Aorta (tissue), 5 donors: ENCODE measurements at regions of chr18 and their contacts with region 1.

Region 1: DNA sequence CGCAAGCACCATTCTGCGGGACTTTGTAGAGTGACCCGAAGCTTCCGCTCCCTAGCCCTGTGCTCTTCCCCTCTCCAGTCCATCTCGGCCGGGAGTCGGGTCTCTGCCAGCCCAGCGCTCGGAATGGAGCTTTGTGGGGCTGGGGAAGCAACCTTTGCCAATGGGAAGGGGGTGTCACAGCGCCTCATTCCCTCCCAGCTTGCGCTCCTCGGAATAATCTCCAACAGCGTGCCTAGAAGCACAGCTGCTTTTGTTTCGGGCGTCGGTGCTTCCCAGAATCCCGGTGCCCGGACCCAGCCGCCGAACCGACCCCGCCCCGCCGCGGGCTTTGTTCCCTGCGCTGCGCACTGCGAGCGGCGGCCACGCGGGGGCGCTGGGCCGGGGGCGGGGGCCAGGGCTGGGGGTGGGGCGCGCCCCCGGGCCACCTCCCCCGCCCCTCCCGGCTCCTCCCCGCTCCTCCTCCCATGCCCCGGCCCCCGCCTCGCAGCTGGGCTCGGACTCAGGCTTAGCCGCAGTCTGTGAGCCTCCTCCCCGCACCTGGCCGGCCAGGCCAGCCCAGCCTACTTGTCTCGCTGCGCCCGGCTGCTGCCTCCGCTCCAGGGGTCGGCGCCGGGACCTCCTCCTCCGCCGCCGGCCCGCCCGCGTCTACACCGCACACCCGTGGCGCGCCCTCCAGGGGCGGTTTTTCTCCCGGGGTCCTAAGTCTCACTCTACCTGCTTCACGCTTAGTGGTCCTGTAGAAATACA is 77.7 kb upstream of the SMAD2 start:
- DNase-seq: peak; percentile 74 to 90
- ATAC-seq: peak; percentile 90
- H3K4me3 ChIP-seq: peak overlapping the region; percentile 47 to 70
- H3K27ac ChIP-seq: no peak overlapping the region
- H3K4me1 ChIP-seq: no peaks in the 10 kb centered on the region
- H3K27me3 ChIP-seq: no peaks in the 10 kb centered on the region

Region 2: GRCh38 chr18:47883771-47884413 is 124.2 kb before region 1 on chr18:
- intact Hi-C with region 1: loop called in 1 of 2 experiments (anchors 10 kb)
- DNase-seq: no peak
- ATAC-seq: no peak
- H3K4me3 ChIP-seq: no peak overlapping the region
- H3K27ac ChIP-seq: no peak overlapping the region
- H3K4me1 ChIP-seq: no peaks in the 10 kb centered on the region
- H3K27me3 ChIP-seq: no peaks in the 10 kb centered on the region

Region 3: DNA sequence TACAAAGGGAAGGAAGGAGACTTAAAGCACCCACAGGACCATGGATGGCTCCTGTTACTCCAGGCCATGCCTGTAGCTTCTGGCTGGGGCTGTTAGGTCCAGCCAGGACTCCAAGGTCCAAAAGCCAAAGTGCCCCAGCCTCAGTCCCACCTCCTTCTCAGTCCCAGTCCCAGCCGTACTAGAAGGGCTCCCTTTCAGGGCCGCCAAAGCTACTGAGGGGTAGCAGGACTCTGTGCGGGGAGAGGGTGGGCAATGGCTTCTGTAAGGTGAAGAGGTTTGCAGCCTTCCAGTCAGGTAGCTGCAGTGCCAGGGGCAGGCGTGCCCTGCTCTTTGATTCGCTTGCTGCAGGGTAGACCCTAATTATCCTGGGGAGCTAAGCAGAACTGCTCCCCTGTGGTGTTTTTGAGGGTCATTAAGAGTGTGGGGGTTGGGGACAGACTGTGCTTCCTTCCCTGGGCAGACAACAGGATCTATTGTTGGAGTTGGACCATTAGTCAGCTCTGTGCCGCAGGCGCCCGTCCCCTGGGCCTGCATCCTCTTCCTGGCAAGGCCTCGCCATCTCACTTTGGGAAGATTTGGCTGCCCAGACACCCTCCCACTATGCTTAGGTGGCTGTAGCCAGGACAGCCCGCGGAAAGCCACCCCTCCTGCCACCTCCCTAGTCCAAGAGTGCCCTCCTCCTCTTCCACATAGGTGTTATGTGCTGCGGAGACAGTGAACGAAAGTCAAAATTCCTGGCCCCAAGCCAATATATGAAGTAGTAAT is 282.2 kb after region 1 on chr18:
- intact Hi-C with region 1: no loop called
- DNase-seq: no peak
- ATAC-seq: no peak
- H3K4me3 ChIP-seq: no peak overlapping the region
- H3K27ac ChIP-seq: no peak overlapping the region
- H3K4me1 ChIP-seq: no peaks in the 10 kb centered on the region
- H3K27me3 ChIP-seq: no peaks in the 10 kb centered on the region